Caki2 (cell line): ENCODE measurements at regions of chr19 and their contacts with region 1.

Region 1: GRCh38 chr19:30649934-30650614 is 277.9 kb downstream of the ZNF536 start:
- DNase-seq: peak; percentile 26

Region 2: GRCh38 chr19:29745253-29745652 is 904.8 kb before region 1 on chr19:
- in situ Hi-C with region 1: loop called (anchors 25 kb)
- DNase-seq: no peak

Region 3: DNA sequence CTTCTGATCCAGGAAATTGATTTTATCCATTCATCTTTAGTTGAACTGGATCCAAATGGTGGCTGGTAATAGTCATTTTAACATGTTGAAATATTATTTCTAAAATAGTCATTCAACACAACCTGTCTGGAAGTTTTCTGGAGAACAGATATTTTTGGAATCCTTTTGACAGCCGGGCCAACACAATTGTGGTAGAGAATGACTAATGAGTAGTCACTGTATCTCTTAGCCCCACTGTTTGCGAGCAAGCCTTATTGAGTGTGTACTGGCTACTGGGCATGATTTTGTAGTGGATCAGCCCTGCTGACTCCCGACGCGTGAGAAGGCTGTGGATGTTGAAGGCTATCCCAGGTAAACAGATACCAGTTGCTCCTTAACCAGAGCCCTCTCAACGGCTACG is 105.5 kb after region 1 on chr19:
- in situ Hi-C with region 1: no loop called
- DNase-seq: no peak